Naive thymus-derived CD4-positive, alpha-beta T cell (primary cell): ENCODE measurements at regions of chr5 and their contacts with region 1.

Region 1: GRCh38 chr5:170293273-170293672 is 4.3 kb downstream of the LCP2 start:
- DNase-seq: peak in 2 of 9 donors; percentile 18 to 60
- ATAC-seq: peak; percentile 75
- H3K4me3 ChIP-seq: peak overlapping the region; percentile 92
- H3K4me3 Mint-ChIP-seq: peak overlapping the region; percentile 92 to 100 (median 98)
- H3K27ac ChIP-seq: peak overlapping the region; percentile 88
- H3K27ac Mint-ChIP-seq: peak overlapping the region; percentile 67 to 98 (median 95)
- H3K4me1 ChIP-seq: peaks cover 58 to 66% of the 10 kb centered on the region in 2 donors
- H3K4me1 Mint-ChIP-seq: peaks cover 62 to 75% (median 71%) of the 10 kb centered on the region in 7 donors
- H3K27me3 ChIP-seq: no peaks in the 10 kb centered on the region
- H3K27me3 Mint-ChIP-seq: no peaks in the 10 kb centered on the region

Region 2: GRCh38 chr5:169503886-169504285 is 789.4 kb before region 1 on chr5:
- CTCF ChIA-PET with region 1: no interaction called
- POLR2A ChIA-PET with region 1: no interaction called
- intact Hi-C with region 1: no loop called
- DNase-seq: no peak
- ATAC-seq: no peak
- H3K4me3 ChIP-seq: no peak overlapping the region
- H3K4me3 Mint-ChIP-seq: no peak overlapping the region
- H3K27ac ChIP-seq: no peak overlapping the region
- H3K27ac Mint-ChIP-seq: no peak overlapping the region
- H3K4me1 ChIP-seq: no peaks in the 10 kb centered on the region
- H3K4me1 Mint-ChIP-seq: no peaks in the 10 kb centered on the region
- H3K27me3 ChIP-seq: no peaks in the 10 kb centered on the region
- H3K27me3 Mint-ChIP-seq: peaks cover 5 to 25% (median 14%) of the 10 kb centered on the region in 5 donors

Region 3: GRCh38 chr5:170225326-170226128 is 67.7 kb before region 1 on chr5:
- CTCF ChIA-PET with region 1: interaction called, 5 read pairs
- POLR2A ChIA-PET with region 1: no interaction called
- intact Hi-C with region 1: loop called in 1 of 2 experiments (anchors 2 kb)
- DNase-seq: peak; percentile 45 to 78 (median 69)
- ATAC-seq: peak; percentile 75
- H3K4me3 ChIP-seq: no peak overlapping the region
- H3K4me3 Mint-ChIP-seq: peak overlapping the region in 1 of 10 donors; percentile 15
- H3K27ac ChIP-seq: no peak overlapping the region
- H3K27ac Mint-ChIP-seq: peak overlapping the region in 3 of 9 donors; percentile 31 to 75 (median 61)
- H3K4me1 ChIP-seq: no peaks in the 10 kb centered on the region
- H3K4me1 Mint-ChIP-seq: peaks cover 0 to 11% (median 5%) of the 10 kb centered on the region in 7 donors
- H3K27me3 ChIP-seq: no peaks in the 10 kb centered on the region
- H3K27me3 Mint-ChIP-seq: no peaks in the 10 kb centered on the region

Region 4: GRCh38 chr5:170253844-170254455 is 39.3 kb before region 1 on chr5:
- CTCF ChIA-PET with region 1: interaction called, 3 read pairs
- POLR2A ChIA-PET with region 1: interaction called, 3 read pairs
- intact Hi-C with region 1: loop called in 1 of 2 experiments (anchors 1 kb)
- DNase-seq: peak in 8 of 9 donors; percentile 41 to 76 (median 56)
- ATAC-seq: peak; percentile 95
- H3K4me3 ChIP-seq: no peak overlapping the region
- H3K4me3 Mint-ChIP-seq: peak overlapping the region in 8 of 10 donors; percentile 5 to 61 (median 40)
- H3K27ac ChIP-seq: peak overlapping the region; percentile 53
- H3K27ac Mint-ChIP-seq: peak overlapping the region; percentile 28 to 97 (median 75)
- H3K4me1 ChIP-seq: peaks cover 19 to 21% of the 10 kb centered on the region in 2 donors
- H3K4me1 Mint-ChIP-seq: peaks cover 20 to 67% (median 63%) of the 10 kb centered on the region in 7 donors
- H3K27me3 ChIP-seq: no peaks in the 10 kb centered on the region
- H3K27me3 Mint-ChIP-seq: no peaks in the 10 kb centered on the region

Region 5: DNA sequence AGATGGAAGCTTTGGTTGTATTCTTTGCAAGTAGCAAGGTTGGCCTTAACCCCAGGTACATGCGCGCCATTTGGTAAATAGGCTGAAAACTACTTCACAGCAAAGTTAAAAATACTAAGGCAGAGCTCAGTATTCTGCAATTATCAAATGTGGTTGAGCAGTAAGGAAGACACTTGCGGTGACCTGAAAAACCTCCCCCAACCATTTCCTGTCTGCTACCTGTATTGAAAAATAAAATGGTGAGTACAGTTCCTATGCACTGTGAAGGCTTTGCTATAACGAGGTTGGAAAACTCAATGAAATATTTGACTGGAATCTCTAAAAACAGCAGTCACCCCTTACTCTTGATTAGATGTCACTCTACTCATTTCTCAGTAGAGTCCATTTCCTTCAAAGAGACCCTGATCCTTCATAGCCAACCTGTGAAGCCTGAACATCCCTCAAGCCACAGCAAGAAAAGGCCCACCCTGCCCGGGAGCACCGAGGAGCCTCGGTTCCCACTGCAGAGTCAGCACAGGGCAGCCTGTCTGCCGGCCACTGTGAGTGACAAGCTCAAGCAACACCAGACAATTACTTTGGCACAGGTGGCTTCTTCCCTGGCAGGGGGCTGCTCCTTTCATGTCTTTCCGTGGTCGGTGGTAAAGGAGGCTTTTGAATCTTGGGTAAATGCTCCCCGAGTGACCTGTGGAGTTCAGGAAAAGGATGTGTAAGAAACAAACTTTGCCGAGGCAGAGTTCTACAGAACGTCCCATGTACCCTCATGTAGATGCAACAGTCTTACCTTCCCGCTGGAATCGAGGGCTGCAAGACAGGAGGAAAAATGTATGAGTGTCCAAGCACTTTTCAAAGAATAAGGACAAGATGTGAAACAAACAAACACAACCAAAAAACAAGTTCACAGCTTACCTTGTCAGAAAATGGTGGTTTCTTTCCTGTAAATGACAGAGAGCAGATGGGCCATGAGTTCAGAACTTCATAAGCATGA is 30.9 kb before region 1 on chr5:
- CTCF ChIA-PET with region 1: interaction called, 430 read pairs
- POLR2A ChIA-PET with region 1: interaction called, 95 read pairs
- intact Hi-C with region 1: no loop called
- DNase-seq: peak in 7 of 9 donors; percentile 78 to 89 (median 86)
- ATAC-seq: peak; percentile 90
- H3K4me3 ChIP-seq: peak overlapping the region; percentile 21
- H3K4me3 Mint-ChIP-seq: peak overlapping the region; percentile 64 to 87 (median 76)
- H3K27ac ChIP-seq: peak overlapping the region; percentile 74
- H3K27ac Mint-ChIP-seq: peak overlapping the region; percentile 89 to 99 (median 97)
- H3K4me1 ChIP-seq: peaks cover 49 to 72% of the 10 kb centered on the region in 2 donors
- H3K4me1 Mint-ChIP-seq: peaks cover 52 to 99% (median 96%) of the 10 kb centered on the region in 7 donors
- H3K27me3 ChIP-seq: no peaks in the 10 kb centered on the region
- H3K27me3 Mint-ChIP-seq: no peaks in the 10 kb centered on the region

Region 6: DNA sequence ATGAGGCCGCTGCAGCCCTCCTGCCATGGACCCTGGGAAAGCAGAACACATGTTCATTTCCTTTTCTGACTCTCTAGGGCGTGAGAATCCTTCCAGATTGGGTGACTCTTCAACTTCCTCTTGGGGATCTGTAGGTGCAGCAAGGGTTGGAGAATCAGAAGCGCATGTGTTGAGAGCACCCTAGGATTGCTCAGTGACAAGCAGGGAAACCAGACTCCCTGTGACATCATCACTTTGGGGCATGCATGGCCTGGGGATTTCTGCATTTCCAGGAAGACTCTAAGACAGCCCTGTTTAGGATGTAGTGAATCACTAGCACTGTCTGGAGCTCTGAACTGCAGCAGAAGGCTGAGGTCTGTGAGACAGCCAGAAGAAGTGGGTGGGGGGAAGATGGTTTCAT is 19.4 kb after region 1 on chr5:
- CTCF ChIA-PET with region 1: interaction called, 5 read pairs
- POLR2A ChIA-PET with region 1: interaction called, 1,119 read pairs
- intact Hi-C with region 1: loop called in 1 of 2 experiments (anchors 2 kb)
- DNase-seq: peak in 4 of 9 donors; percentile 27 to 85 (median 48)
- ATAC-seq: peak; percentile 87
- H3K4me3 ChIP-seq: peak overlapping the region; percentile 39
- H3K4me3 Mint-ChIP-seq: peak overlapping the region; percentile 66 to 83 (median 75)
- H3K27ac ChIP-seq: peak overlapping the region; percentile 69
- H3K27ac Mint-ChIP-seq: peak overlapping the region; percentile 58 to 97 (median 95)
- H3K4me1 ChIP-seq: peaks cover 29 to 50% of the 10 kb centered on the region in 2 donors
- H3K4me1 Mint-ChIP-seq: peaks cover 38 to 85% (median 70%) of the 10 kb centered on the region in 7 donors
- H3K27me3 ChIP-seq: no peaks in the 10 kb centered on the region
- H3K27me3 Mint-ChIP-seq: no peaks in the 10 kb centered on the region

Region 7: GRCh38 chr5:170333161-170333910 is 40.1 kb after region 1 on chr5:
- CTCF ChIA-PET with region 1: interaction called, 120 read pairs
- POLR2A ChIA-PET with region 1: interaction called, 391 read pairs
- intact Hi-C with region 1: loop called (anchors 1 kb)
- DNase-seq: peak in 6 of 9 donors; percentile 36 to 61 (median 50)
- ATAC-seq: peak; percentile 36
- H3K4me3 ChIP-seq: peak overlapping the region; percentile 40
- H3K4me3 Mint-ChIP-seq: peak overlapping the region in 4 of 10 donors; percentile 77 to 82 (median 81)
- H3K27ac ChIP-seq: peak overlapping the region; percentile 87
- H3K27ac Mint-ChIP-seq: no peak overlapping the region
- H3K4me1 ChIP-seq: peaks cover 79 to 87% of the 10 kb centered on the region in 2 donors
- H3K4me1 Mint-ChIP-seq: peaks cover 0 to 65% (median 30%) of the 10 kb centered on the region in 7 donors
- H3K27me3 ChIP-seq: no peaks in the 10 kb centered on the region
- H3K27me3 Mint-ChIP-seq: peaks cover 0 to 3% (median 0%) of the 10 kb centered on the region in 5 donors

Region 8: GRCh38 chr5:170782438-170782837 is 489.2 kb after region 1 on chr5:
- CTCF ChIA-PET with region 1: no interaction called
- POLR2A ChIA-PET with region 1: no interaction called
- intact Hi-C with region 1: no loop called
- DNase-seq: no peak
- ATAC-seq: no peak
- H3K4me3 ChIP-seq: no peak overlapping the region
- H3K4me3 Mint-ChIP-seq: no peak overlapping the region
- H3K27ac ChIP-seq: no peak overlapping the region
- H3K27ac Mint-ChIP-seq: no peak overlapping the region
- H3K4me1 ChIP-seq: no peaks in the 10 kb centered on the region
- H3K4me1 Mint-ChIP-seq: no peaks in the 10 kb centered on the region
- H3K27me3 ChIP-seq: no peaks in the 10 kb centered on the region
- H3K27me3 Mint-ChIP-seq: peaks cover 0 to 6% (median 3%) of the 10 kb centered on the region in 5 donors